CD8-positive, alpha-beta T cell (primary cell): ENCODE measurements at regions of chr3 and their contacts with region 1.

Region 1: GRCh38 chr3:183766745-183767606 is 58.4 kb downstream of the MAP6D1 start:
- DNase-seq: peak; percentile 42 to 82 (median 72)
- ATAC-seq: peak; percentile 91
- H3K4me3 ChIP-seq: no peak overlapping the region
- H3K4me3 Mint-ChIP-seq: no peak overlapping the region
- H3K27ac ChIP-seq: no peak overlapping the region
- H3K27ac Mint-ChIP-seq: no peak overlapping the region
- H3K4me1 ChIP-seq: no peaks in the 10 kb centered on the region
- H3K4me1 Mint-ChIP-seq: peaks cover 4% of the 10 kb centered on the region
- H3K27me3 ChIP-seq: no peaks in the 10 kb centered on the region
- H3K27me3 Mint-ChIP-seq: no peaks in the 10 kb centered on the region
- CTCF ChIP-seq: peak; percentile 77

Region 2: GRCh38 chr3:183122257-183122932 is 644.6 kb before region 1 on chr3:
- CTCF ChIA-PET with region 1: interaction called, 4 read pairs
- POLR2A ChIA-PET with region 1: no interaction called
- intact Hi-C with region 1: loop called (anchors 1 to 2 kb)
- DNase-seq: peak in 2 of 9 experiments; percentile 58 to 69
- ATAC-seq: peak; percentile 65
- H3K4me3 ChIP-seq: no peak overlapping the region
- H3K4me3 Mint-ChIP-seq: no peak overlapping the region
- H3K27ac ChIP-seq: no peak overlapping the region
- H3K27ac Mint-ChIP-seq: no peak overlapping the region
- H3K4me1 ChIP-seq: no peaks in the 10 kb centered on the region
- H3K4me1 Mint-ChIP-seq: no peaks in the 10 kb centered on the region
- H3K27me3 ChIP-seq: no peaks in the 10 kb centered on the region
- H3K27me3 Mint-ChIP-seq: peaks cover 6% of the 10 kb centered on the region
- CTCF ChIP-seq: peak; percentile 93

Region 3: DNA sequence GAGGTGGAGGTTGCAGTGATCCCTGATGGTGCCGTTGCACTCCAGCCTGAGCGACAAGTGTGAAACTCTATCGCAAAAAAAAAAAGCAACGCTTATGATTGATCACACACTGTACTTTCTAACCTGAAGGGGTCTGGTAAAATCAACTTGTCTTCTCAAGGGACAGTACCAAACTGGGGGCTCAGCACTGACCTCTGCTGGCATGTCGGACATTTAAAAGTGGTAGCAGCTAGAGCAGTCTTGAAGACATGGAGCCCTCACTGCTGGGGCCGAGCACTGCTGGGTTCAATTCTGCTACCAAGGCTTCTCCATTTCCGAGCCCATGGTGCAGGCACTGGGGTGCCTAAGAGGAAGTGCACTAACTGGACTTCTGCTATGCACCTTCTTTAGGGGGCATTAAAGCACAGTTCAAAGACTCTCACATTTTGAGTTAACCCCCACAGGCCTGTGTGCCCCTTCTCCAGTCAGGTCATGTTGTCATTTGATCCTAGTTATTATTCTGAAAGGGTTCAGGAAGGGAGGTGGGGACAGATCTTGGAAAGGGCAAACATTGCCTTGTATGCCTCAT is 578.0 kb before region 1 on chr3:
- CTCF ChIA-PET with region 1: interaction called, 5 read pairs
- POLR2A ChIA-PET with region 1: no interaction called
- intact Hi-C with region 1: loop called (anchors 5 to 10 kb)
- DNase-seq: peak in 4 of 9 experiments; percentile 24 to 50 (median 38)
- ATAC-seq: no peak
- H3K4me3 ChIP-seq: no peak overlapping the region
- H3K4me3 Mint-ChIP-seq: no peak overlapping the region
- H3K27ac ChIP-seq: no peak overlapping the region
- H3K27ac Mint-ChIP-seq: no peak overlapping the region
- H3K4me1 ChIP-seq: no peaks in the 10 kb centered on the region
- H3K4me1 Mint-ChIP-seq: no peaks in the 10 kb centered on the region
- H3K27me3 ChIP-seq: no peaks in the 10 kb centered on the region
- H3K27me3 Mint-ChIP-seq: no peaks in the 10 kb centered on the region
- CTCF ChIP-seq: no peak

Region 4: GRCh38 chr3:183468424-183468823 is 298.6 kb before region 1 on chr3:
- CTCF ChIA-PET with region 1: interaction called, 83 read pairs
- POLR2A ChIA-PET with region 1: interaction called, 3 read pairs
- intact Hi-C with region 1: loop called (anchors 1 kb)
- DNase-seq: no peak
- ATAC-seq: no peak
- H3K4me3 ChIP-seq: no peak overlapping the region
- H3K4me3 Mint-ChIP-seq: no peak overlapping the region
- H3K27ac ChIP-seq: no peak overlapping the region
- H3K27ac Mint-ChIP-seq: no peak overlapping the region
- H3K4me1 ChIP-seq: peaks cover 3% of the 10 kb centered on the region
- H3K4me1 Mint-ChIP-seq: peaks cover 5% of the 10 kb centered on the region
- H3K27me3 ChIP-seq: no peaks in the 10 kb centered on the region
- H3K27me3 Mint-ChIP-seq: peaks cover 2% of the 10 kb centered on the region
- CTCF ChIP-seq: no peak

Region 5: DNA sequence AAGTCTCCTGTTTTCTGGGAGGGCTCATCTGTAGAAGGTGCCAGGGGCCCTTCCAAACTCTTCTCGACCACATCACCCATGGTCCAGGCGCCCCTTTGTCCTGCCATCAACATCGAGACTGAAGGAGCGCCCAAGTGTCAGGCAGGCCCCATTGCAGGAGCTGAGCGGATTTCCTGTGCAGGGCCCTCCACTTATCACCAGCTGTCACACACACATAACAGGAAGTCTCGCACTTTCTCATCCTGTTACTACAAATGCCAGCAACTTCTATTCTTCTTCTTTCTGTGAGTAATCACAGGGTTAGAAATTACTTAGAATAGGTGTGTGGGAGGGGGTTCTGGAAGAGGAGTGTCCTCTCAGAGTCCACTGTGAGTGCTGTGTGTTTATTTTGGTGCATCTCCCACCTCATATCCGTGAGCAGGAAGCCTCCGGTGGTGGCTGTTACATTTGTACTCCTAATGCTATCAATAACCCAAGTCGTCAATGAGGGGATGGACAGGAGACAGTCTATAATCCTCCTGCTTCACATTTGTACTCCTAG is 211.4 kb before region 1 on chr3 and contains the start of gene KLHL6:
- CTCF ChIA-PET with region 1: interaction called, 3 read pairs
- POLR2A ChIA-PET with region 1: no interaction called
- intact Hi-C with region 1: loop called (anchors 2 to 5 kb)
- DNase-seq: peak; percentile 44 to 88 (median 76)
- ATAC-seq: peak; percentile 84
- H3K4me3 ChIP-seq: peak within 1 kb of the TSS; percentile 68 to 71
- H3K4me3 Mint-ChIP-seq: peak within 1 kb of the TSS; percentile 93
- H3K27ac ChIP-seq: peak within 1 kb of the TSS; percentile 73 to 91
- H3K27ac Mint-ChIP-seq: peak within 1 kb of the TSS; percentile 98
- H3K4me1 ChIP-seq: peaks cover 32% of the 10 kb centered on the region
- H3K4me1 Mint-ChIP-seq: peaks cover 53% of the 10 kb centered on the region
- H3K27me3 ChIP-seq: no peaks in the 10 kb centered on the region
- H3K27me3 Mint-ChIP-seq: no peaks in the 10 kb centered on the region
- CTCF ChIP-seq: peak; percentile 22
- total RNA-seq, gene KLHL6: 27.7 to 29.7 TPM

Region 6: GRCh38 chr3:183591881-183592521 is 175.0 kb before region 1 on chr3:
- CTCF ChIA-PET with region 1: interaction called, 3 read pairs
- POLR2A ChIA-PET with region 1: no interaction called
- intact Hi-C with region 1: loop called in 1 of 2 experiments (anchors 5 kb)
- DNase-seq: peak in 3 of 9 experiments; percentile 7 to 56 (median 38)
- ATAC-seq: no peak
- H3K4me3 ChIP-seq: no peak overlapping the region
- H3K4me3 Mint-ChIP-seq: peak overlapping the region; percentile 71
- H3K27ac ChIP-seq: no peak overlapping the region
- H3K27ac Mint-ChIP-seq: no peak overlapping the region
- H3K4me1 ChIP-seq: peaks cover 21% of the 10 kb centered on the region
- H3K4me1 Mint-ChIP-seq: peaks cover 24% of the 10 kb centered on the region
- H3K27me3 ChIP-seq: no peaks in the 10 kb centered on the region
- H3K27me3 Mint-ChIP-seq: no peaks in the 10 kb centered on the region
- CTCF ChIP-seq: no peak

Region 7: DNA sequence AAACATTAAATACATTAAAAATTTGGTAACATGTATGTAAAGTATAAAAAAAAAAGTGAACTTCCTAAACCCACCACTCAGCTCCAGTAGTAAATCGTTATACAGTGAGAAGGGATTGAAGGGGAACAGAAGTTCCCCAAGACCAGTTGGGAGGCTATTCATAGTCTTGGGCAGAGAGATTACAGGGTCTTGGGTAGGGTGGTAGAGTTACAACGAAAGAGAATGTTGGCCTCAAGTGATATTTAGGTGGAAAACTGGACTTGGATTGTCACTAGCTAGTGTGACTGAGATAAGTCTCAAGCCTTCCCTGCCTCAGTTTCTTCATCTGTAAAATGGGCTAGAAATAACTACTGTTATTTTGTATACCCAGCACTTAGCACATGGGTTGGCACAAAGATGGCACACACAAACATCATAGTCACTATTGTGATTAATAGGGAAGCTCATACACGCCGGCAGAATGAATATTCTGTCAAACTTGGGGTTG is 69.8 kb before region 1 on chr3:
- CTCF ChIA-PET with region 1: no interaction called
- POLR2A ChIA-PET with region 1: no interaction called
- intact Hi-C with region 1: no loop called
- DNase-seq: no peak
- ATAC-seq: no peak
- H3K4me3 ChIP-seq: peak overlapping the region; percentile 90 to 93
- H3K4me3 Mint-ChIP-seq: peak overlapping the region; percentile 82
- H3K27ac ChIP-seq: peak overlapping the region; percentile 36 to 43
- H3K27ac Mint-ChIP-seq: peak overlapping the region; percentile 66
- H3K4me1 ChIP-seq: peaks cover 19% of the 10 kb centered on the region
- H3K4me1 Mint-ChIP-seq: peaks cover 31% of the 10 kb centered on the region
- H3K27me3 ChIP-seq: no peaks in the 10 kb centered on the region
- H3K27me3 Mint-ChIP-seq: no peaks in the 10 kb centered on the region
- CTCF ChIP-seq: no peak

Region 8: GRCh38 chr3:183754052-183754451 is 12.9 kb before region 1 on chr3:
- CTCF ChIA-PET with region 1: interaction called, 12 read pairs
- POLR2A ChIA-PET with region 1: interaction called, 3 read pairs
- intact Hi-C with region 1: no loop called
- DNase-seq: no peak
- ATAC-seq: no peak
- H3K4me3 ChIP-seq: no peak overlapping the region
- H3K4me3 Mint-ChIP-seq: no peak overlapping the region
- H3K27ac ChIP-seq: no peak overlapping the region
- H3K27ac Mint-ChIP-seq: no peak overlapping the region
- H3K4me1 ChIP-seq: no peaks in the 10 kb centered on the region
- H3K4me1 Mint-ChIP-seq: no peaks in the 10 kb centered on the region
- H3K27me3 ChIP-seq: no peaks in the 10 kb centered on the region
- H3K27me3 Mint-ChIP-seq: no peaks in the 10 kb centered on the region
- CTCF ChIP-seq: no peak